ENCODE measurements at regions of chr19 and their contacts with region 1.

Region 1: DNA sequence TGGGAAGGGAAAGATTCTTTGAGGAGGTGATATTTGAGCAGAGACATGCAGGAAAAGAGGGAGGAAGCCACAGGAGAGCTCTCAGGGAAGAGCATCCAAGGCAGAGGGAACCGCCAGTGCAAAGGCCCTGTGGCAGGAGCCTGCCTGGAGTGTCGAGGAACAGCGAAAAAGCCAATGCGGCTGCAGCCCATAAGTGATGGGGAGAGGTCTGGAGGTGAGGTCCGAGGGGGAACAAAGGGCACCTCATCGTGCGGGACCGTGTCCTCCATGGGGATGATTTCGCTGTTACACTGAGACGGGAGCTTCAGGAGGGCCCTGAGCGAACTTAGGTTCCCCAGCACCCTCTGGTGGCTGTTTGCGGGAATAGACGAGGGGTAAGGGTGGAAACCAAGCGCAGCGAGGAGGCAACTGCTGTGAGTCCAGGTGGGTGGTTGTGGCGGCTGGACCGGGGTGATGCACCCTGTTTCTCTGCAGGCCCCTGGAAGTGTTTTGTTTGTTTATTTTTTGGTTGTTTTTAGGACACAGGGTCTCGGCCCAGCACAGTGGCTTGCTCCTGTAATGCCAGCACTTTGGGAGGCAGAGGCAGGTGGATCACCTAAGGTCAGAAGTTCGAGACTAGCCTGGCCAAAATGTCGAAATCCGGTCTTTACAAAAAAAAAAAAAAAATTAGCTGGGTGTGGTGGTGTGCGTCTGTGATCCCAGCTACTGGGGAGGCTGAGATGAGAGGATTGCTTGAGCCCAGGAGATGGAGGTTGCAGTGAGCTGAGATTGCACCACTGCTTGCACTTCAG is 5.9 kb upstream of the EHD2 start:
- DNase-seq: peak; percentile 43 to 83
- ATAC-seq: peak; percentile 89

Region 2: GRCh38 chr19:47436712-47437401 is 270.5 kb before region 1 on chr19:
- intact Hi-C with region 1: loop called in 1 of 2 experiments (anchors 5 kb)
- DNase-seq: peak; percentile 64 to 86
- ATAC-seq: peak; percentile 98

Region 3: DNA sequence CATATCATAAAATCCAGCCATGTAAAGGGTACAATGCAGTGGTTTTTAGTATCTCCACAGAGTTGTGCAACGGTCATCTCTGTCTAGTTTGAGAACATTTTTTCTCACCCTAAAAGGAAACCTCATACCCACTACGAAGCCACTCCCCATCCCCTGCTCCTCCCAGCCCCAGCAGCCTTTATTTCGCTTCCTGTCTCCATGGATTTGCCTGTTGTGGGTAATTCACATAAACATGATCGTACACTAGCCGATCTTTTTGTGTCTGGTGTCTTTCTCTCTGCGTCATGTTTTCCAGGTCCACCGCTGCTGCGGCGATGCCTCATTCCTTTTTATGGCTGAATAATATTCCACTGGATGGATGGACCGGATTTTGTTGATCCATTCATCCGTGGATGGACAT is 69.8 kb before region 1 on chr19:
- intact Hi-C with region 1: no loop called
- DNase-seq: no peak
- ATAC-seq: no peak

Region 4: DNA sequence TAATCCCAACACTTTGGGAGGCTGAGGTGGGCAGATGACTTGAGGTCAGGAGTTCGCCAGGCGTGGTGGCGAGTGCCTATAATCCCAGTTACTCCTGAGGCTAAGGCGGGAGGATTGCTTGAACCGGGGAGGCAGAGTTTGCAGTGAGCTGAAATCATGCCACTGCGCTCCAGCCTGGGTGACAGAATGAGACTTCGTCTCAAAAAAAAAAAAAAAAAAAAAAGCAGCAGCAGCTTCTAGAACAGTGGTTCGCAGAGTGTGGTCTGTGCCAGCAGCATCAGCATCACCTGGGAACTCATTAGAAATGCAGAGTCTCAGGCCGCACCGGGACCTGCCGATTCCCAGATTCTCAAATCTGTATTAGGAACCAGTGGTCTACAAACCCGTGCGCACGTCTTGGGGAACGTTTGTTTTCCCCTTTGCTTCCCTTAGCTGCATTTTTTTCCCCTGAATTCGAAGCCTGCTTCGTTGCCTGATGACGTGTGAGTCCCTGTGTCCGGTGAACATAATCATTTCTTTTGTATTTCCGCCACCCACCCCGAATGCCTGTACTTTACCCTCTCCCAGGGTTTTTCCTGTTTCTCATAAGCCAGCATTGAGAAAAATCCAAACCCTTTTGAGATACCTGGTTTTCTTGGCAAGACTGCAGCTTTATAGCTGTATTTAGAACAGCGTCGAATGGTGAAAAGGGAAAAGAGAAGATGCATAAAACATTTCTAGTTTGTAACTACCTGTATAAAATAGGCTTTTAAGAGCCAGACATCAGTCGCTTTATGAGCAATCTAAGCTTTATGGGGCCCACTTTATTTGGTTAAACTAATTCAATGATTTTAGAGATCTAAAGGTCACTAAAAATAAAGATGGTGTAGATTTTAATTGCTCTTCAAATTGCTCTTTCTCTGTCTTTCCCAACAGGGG is 48.6 kb before region 1 on chr19:
- intact Hi-C with region 1: no loop called
- DNase-seq: peak; percentile 59 to 65
- ATAC-seq: peak; percentile 77

Region 5: DNA sequence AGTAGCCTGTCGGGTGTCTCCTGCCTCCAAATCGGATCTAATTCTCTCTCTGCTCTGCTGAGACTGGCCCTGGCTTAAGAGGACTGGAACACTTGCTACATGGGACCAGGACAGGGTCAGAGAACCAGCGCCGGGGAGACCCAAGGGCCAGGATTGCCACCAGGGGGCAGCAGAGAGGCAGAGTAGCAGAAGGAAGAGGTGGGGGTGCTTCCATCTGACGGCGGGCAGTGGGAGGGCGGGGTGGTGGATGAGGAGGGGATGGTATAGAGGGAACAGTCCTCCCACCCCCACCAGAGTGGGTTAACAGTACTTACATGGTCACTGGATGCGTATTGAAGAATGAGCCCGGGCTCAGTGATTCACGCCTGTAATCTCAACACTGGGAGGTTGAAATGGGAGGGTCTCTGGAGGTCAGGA is 83.1 kb after region 1 on chr19:
- intact Hi-C with region 1: no loop called
- DNase-seq: peak; percentile 70 to 92
- ATAC-seq: peak; percentile 74